H1 (cell line): ENCODE measurements at regions of chr1 and their contacts with region 1.

Region 1: GRCh38 chr1:32221980-32222755 is at the starts of genes EIF3I and TMEM234:
- DNase-seq: peak in 1 of 2 experiments; percentile 92
- H3K4me3 ChIP-seq: peak within 1 kb of the TSS; percentile 66 to 97 (median 88)
- H3K27ac ChIP-seq: peak within 1 kb of the TSS; percentile 83
- H3K4me1 ChIP-seq: peaks cover 0 to 7% (median 2%) of the 10 kb centered on the region in 4 experiments; a peak in 3 of 7 replicates
- H3K27me3 ChIP-seq: no peaks in the 10 kb centered on the region
- CTCF ChIP-seq: no peak
- EP300 ChIP-seq: no peak
- POLR2A ChIP-seq: peak in 1 of 2 experiments; percentile 77; a peak in 1 of 3 replicates
- RAD21 ChIP-seq: no peak
- total RNA-seq, gene EIF3I: 243 and 247 TPM in 2 replicates
- total RNA-seq, gene TMEM234: 8.9 TPM in 2 replicates

Region 2: GRCh38 chr1:32100807-32101697 is 121.1 kb before region 1 on chr1:
- CTCF ChIA-PET with region 1: no interaction called
- POLR2A ChIA-PET with region 1: no interaction called
- DNase-seq: no peak
- H3K4me3 ChIP-seq: no peak overlapping the region
- H3K27ac ChIP-seq: no peak overlapping the region
- H3K4me1 ChIP-seq: no peaks in the 10 kb centered on the region
- H3K27me3 ChIP-seq: no peaks in the 10 kb centered on the region
- CTCF ChIP-seq: no peak
- EP300 ChIP-seq: no peak
- POLR2A ChIP-seq: no peak
- RAD21 ChIP-seq: no peak

Region 3: GRCh38 chr1:32205401-32206370 is 16.5 kb before region 1 on chr1 and contains the start of gene IQCC:
- CTCF ChIA-PET with region 1: interaction called, 25 read pairs
- POLR2A ChIA-PET with region 1: interaction called, 25 read pairs
- DNase-seq: peak; percentile 81 to 93
- H3K4me3 ChIP-seq: peak within 1 kb of the TSS; percentile 64 to 86 (median 80)
- H3K27ac ChIP-seq: peak within 1 kb of the TSS; percentile 51; the same call in 1 of the 2 replicates
- H3K4me1 ChIP-seq: peaks cover 0 to 21% (median 10%) of the 10 kb centered on the region in 4 experiments; a peak in 6 of 7 replicates
- H3K27me3 ChIP-seq: peaks cover 0 to 4% (median 2%) of the 10 kb centered on the region in 4 experiments; a peak in 3 of 7 replicates
- CTCF ChIP-seq: peak in 2 of 3 experiments; percentile 31 to 43; a peak in 2 of 4 replicates
- EP300 ChIP-seq: 0 out of 3 replicates have a peak, but pooled peaks of 1 of the 2 experiments have one; percentile 25
- POLR2A ChIP-seq: peak in 1 of 2 experiments; percentile 90; a peak in 2 of 3 replicates
- RAD21 ChIP-seq: peak; percentile 46 to 49
- total RNA-seq, gene IQCC: 4.2 and 4.3 TPM in 2 replicates

Region 4: GRCh38 chr1:32234792-32235191 is 12.6 kb after region 1 on chr1:
- CTCF ChIA-PET with region 1: interaction called, 70 read pairs
- POLR2A ChIA-PET with region 1: interaction called, 52 read pairs
- DNase-seq: no peak
- H3K4me3 ChIP-seq: no peak overlapping the region
- H3K27ac ChIP-seq: no peak overlapping the region
- H3K4me1 ChIP-seq: peaks cover 0 to 2% (median 0%) of the 10 kb centered on the region in 4 experiments; a peak in 1 of 7 replicates
- H3K27me3 ChIP-seq: no peaks in the 10 kb centered on the region
- CTCF ChIP-seq: no peak
- EP300 ChIP-seq: no peak
- POLR2A ChIP-seq: no peak
- RAD21 ChIP-seq: peak in 1 of 2 experiments; percentile 23; a peak in 1 of 4 replicates

Region 5: GRCh38 chr1:32426489-32427255 is 204.5 kb after region 1 on chr1:
- CTCF ChIA-PET with region 1: no interaction called
- POLR2A ChIA-PET with region 1: no interaction called
- DNase-seq: no peak
- H3K4me3 ChIP-seq: no peak overlapping the region
- H3K27ac ChIP-seq: no peak overlapping the region
- H3K4me1 ChIP-seq: peaks cover 0 to 10% (median 7%) of the 10 kb centered on the region in 4 experiments; a peak in 5 of 7 replicates
- H3K27me3 ChIP-seq: no peaks in the 10 kb centered on the region
- CTCF ChIP-seq: no peak
- EP300 ChIP-seq: no peak
- POLR2A ChIP-seq: no peak
- RAD21 ChIP-seq: no peak